Lower leg skin (tissue), 4 donors: ENCODE measurements at regions of chr16 and their contacts with region 1.

Region 1: DNA sequence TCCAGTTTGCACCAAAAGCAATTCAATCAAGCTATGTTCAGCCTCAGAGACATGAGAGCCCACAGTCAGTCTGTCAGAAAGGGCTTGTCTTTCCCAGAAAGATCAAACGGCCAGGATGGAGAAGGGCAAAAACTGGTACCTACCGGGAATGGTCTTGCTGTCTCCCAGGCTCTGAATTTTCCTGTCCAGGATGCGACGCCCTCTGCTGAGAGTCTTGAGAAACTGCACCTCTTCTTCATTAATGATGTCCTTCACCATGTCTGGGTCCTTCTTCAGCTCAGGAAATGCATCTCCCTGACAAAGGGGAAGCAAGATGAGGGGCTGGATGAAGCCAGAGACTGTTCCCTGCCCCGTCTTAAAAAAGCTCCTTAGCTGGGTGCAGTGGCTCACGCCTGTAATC is 15.8 kb upstream of the EXOSC6 start:
- DNase-seq: no peak
- H3K4me3 ChIP-seq: no peak overlapping the region
- CTCF ChIP-seq: no peak
- POLR2A ChIP-seq: no peak

Region 2: GRCh38 chr16:69253870-69254341 is 1013.6 kb before region 1 on chr16:
- intact Hi-C with region 1: no loop called
- DNase-seq: peak in 1 of 2 donors; percentile 24
- H3K4me3 ChIP-seq: no peak overlapping the region
- CTCF ChIP-seq: no peak
- POLR2A ChIP-seq: no peak

Region 3: GRCh38 chr16:69890114-69890891 is 377.2 kb before region 1 on chr16:
- intact Hi-C with region 1: no loop called
- DNase-seq: peak; percentile 76 to 89
- H3K4me3 ChIP-seq: no peak overlapping the region
- CTCF ChIP-seq: no peak
- POLR2A ChIP-seq: no peak

Region 4: GRCh38 chr16:70158261-70158939 is 109.1 kb before region 1 on chr16:
- intact Hi-C with region 1: loop called (anchors 10 kb)
- DNase-seq: peak in 1 of 2 donors; percentile 13
- H3K4me3 ChIP-seq: no peak overlapping the region
- CTCF ChIP-seq: no peak
- POLR2A ChIP-seq: no peak